Dorsolateral prefrontal cortex (tissue), 120 donors: ENCODE measurements at regions of chr11 and their contacts with region 1.

Region 1: GRCh38 chr11:74170694-74171629 is at the starts of genes C2CD3 and PPME1:
- DNase-seq: peak; percentile 94 to 99 (median 98)
- H3K4me3 ChIP-seq: peak within 1 kb of the TSS; percentile 67 to 99 (median 87)
- H3K27ac ChIP-seq: peak within 1 kb of the TSS; percentile 24 to 93 (median 86)
- H3K27me3 ChIP-seq: no peaks in the 10 kb centered on the region
- CTCF ChIP-seq: peak in 54 of 56 donors; percentile 26 to 79 (median 60)
- total RNA-seq, gene C2CD3: 30.0 to 76.8 (median 42.6) TPM
- total RNA-seq, gene PPME1: 48.5 to 158 (median 108) TPM

Region 2: GRCh38 chr11:73982969-73983740 is 187.8 kb before region 1 on chr11:
- intact Hi-C with region 1: loop called (anchors 5 to 10 kb)
- DNase-seq: peak; percentile 86 to 96 (median 93)
- H3K4me3 ChIP-seq: peak overlapping the region; percentile 54 to 93 (median 77)
- H3K27ac ChIP-seq: peak overlapping the region; percentile 21 to 98 (median 92)
- H3K27me3 ChIP-seq: no peaks in the 10 kb centered on the region
- CTCF ChIP-seq: peak in 8 of 56 donors; percentile 2 to 23 (median 9)